ENCODE measurements at regions of chr16 and their contacts with region 1.

Region 1: GRCh38 chr16:71288890-71289733 is at the start of gene CMTR2:
- DNase-seq: peak; percentile 93
- H3K4me3 Mint-ChIP-seq: peak within 1 kb of the TSS; percentile 84
- H3K27ac Mint-ChIP-seq: peak within 1 kb of the TSS; percentile 86
- H3K4me1 Mint-ChIP-seq: peaks cover 9% of the 10 kb centered on the region
- H3K27me3 Mint-ChIP-seq: peaks cover 7% of the 10 kb centered on the region
- total RNA-seq, gene CMTR2: 14.4 to 15.1 TPM

Region 2: DNA sequence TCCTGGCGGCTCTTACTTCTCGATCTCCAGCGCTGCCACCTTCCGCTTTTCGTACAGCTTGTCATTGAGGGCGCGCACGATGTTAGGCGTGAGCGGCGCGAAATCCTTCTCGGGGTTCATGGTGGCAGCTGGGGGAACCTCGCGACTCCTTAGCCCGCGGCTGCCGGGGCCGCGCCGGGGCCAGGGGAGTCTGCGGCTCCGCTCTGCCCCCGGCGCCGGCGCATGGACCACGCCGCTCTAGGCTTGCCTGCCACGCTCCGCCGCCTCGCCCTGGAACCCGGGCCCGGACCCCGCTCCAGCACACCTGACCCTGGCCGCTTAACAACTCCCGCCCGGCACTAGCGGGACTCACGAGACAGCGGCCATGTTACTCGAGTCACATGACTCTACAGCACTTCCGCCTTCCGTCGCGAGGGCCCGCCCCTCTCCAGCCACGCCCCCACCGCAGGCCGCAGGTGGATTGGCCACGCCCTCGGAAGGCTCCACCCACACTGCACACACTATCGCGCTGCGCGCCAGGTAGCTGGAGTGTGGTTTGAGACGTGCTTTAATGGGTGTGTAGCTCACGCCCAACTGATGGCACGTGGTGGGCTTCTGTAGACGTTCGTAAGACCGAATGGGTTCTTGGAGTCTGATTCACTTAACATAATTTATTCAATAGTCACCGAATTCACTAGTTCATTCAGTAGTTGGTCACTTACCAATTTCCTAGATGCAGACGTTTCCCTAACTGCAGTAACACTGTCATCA is 488.2 kb before region 1 on chr16 and contains the start of gene VAC14:
- CTCF ChIA-PET with region 1: no interaction called
- intact Hi-C with region 1: loop called (anchors 5 kb)
- DNase-seq: peak; percentile 98
- H3K4me3 Mint-ChIP-seq: peak within 1 kb of the TSS; percentile 88
- H3K27ac Mint-ChIP-seq: peak within 1 kb of the TSS; percentile 32
- H3K4me1 Mint-ChIP-seq: peaks cover 19% of the 10 kb centered on the region
- H3K27me3 Mint-ChIP-seq: no peaks in the 10 kb centered on the region
- total RNA-seq, gene VAC14: 19.6 to 20.6 TPM

Region 3: DNA sequence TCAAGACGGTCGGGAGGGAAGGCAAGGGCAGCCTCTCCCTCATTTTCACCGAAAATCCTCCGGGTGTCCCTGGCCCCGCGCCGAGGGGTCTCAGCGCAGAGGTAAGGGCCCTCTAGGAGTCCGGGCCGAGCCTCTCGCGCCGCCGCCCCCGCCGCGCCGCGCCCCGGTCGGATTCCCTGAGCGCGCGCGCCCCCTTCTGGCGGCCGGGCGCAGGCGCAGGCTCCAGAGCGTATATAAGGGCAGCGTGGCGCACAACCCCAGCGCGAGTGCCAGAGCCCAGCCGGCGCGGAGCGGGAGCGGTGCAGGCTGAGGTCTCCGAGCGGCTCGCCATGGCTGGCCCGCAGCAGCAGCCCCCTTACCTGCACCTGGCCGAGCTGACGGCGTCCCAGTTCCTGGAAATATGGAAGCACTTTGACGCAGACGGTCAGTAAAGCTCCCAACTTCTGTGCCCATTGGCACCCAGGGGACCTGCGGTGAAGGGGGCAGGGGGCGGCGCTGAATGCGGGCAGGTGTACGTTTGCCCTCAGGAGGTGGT is 69.4 kb after region 1 on chr16 and contains the start of gene CALB2:
- CTCF ChIA-PET with region 1: no interaction called
- intact Hi-C with region 1: loop called (anchors 2 kb)
- DNase-seq: peak; percentile 62
- H3K4me3 Mint-ChIP-seq: no peak within 1 kb of the TSS
- H3K27ac Mint-ChIP-seq: no peak within 1 kb of the TSS
- H3K4me1 Mint-ChIP-seq: peaks cover 3% of the 10 kb centered on the region
- H3K27me3 Mint-ChIP-seq: peaks cover 23% of the 10 kb centered on the region
- total RNA-seq, gene CALB2: not detected

Region 4: DNA sequence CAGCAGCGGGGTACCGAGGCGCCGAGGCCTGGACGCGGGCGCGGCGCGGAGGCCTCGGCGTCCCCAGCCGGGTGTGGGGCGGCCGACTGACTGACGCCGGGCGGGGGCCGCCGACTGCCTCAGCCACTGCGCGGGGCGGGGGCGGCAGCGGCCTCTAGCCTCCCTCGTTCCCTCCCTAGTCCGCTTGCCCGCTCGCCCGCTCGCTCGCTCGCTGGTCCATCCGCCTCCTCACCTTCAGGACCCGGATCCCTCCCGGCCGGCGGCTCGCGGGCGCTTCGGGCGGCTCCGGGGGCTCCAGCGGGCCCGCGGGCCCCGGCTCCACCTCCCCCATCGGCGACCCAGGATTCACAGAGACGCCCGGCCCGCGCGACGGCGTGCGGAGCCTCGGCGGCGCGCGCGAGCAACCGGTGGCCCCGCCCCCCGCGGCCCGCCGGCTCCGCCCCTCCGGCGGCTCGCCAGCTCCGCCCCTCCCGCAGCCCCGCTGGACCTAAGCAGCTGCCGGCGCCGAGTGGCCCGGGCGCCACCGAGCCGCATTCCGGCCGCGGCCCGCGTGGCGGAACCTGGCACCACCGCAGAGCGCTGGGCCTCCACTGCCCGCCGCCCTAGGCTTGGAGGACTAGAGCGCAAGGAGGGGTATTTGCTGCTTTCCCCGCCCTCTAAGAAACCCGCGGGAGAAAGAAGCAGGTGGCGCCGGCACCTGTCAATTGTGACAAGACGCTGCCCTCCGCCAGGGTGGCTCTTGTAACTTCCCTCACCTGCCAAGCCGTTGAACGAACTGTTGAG is 434.6 kb after region 1 on chr16:
- CTCF ChIA-PET with region 1: no interaction called
- intact Hi-C with region 1: no loop called
- DNase-seq: peak; percentile 74
- H3K4me3 Mint-ChIP-seq: peak overlapping the region; percentile 80
- H3K27ac Mint-ChIP-seq: no peak overlapping the region
- H3K4me1 Mint-ChIP-seq: peaks cover 18% of the 10 kb centered on the region
- H3K27me3 Mint-ChIP-seq: peaks cover 6% of the 10 kb centered on the region